Naive thymus-derived CD8-positive, alpha-beta T cell (primary cell): ENCODE measurements at regions of chr20 and their contacts with region 1.

Region 1: DNA sequence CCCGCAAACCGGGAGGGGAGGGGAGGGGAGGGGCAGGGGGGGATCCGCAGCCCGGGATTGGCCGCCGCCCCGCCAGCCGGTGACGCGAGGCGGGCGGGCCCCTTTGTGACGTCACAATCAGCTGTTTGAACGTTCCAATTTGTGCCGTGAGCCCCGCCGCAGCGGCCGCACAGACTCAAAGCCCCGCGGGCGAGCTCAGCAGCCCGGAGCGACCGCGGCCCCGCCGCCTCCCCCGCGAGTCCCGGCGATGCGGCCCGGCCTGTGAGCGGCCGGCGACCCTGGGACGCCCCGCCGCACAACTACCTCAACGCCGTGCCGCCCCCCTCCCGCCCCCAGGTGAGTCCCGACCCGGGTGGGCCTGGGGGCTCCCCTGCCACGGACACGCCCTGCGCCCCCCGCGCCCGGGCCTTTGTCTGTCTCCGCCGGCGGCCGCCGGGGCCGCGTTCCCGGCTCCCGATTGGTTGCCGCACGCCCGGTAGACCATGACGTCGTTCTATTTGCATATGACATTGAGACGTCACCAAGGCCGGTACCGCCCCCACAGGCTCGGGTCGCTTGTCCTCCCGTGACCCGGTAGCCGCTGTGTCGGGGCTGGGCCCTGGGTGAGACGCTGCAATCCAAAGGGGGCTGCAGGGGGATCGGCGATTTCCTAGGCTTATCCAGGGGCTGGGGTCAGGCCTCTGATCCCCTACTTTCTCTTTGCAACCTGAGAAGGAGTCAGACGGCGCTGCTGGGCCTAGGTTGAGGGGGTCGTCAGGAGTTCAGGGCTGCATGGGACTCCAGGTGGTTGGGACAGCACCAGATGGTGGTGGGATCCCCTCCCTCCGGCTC is at the start of gene TP53INP2:
- DNase-seq: peak; percentile 73 to 94 (median 89)
- ATAC-seq: peak; percentile 51 to 66
- H3K4me3 Mint-ChIP-seq: peak within 1 kb of the TSS; percentile 88 to 98 (median 94)
- H3K27ac Mint-ChIP-seq: peak within 1 kb of the TSS; percentile 88 to 100 (median 98)
- H3K4me1 Mint-ChIP-seq: peaks cover 16 to 37% (median 21%) of the 10 kb centered on the region in 4 donors
- H3K27me3 Mint-ChIP-seq: peaks cover 0 to 10% (median 5%) of the 10 kb centered on the region in 5 donors
- polyA plus RNA-seq, gene TP53INP2: 0.08 to 0.64 (median 0.53) TPM

Region 2: DNA sequence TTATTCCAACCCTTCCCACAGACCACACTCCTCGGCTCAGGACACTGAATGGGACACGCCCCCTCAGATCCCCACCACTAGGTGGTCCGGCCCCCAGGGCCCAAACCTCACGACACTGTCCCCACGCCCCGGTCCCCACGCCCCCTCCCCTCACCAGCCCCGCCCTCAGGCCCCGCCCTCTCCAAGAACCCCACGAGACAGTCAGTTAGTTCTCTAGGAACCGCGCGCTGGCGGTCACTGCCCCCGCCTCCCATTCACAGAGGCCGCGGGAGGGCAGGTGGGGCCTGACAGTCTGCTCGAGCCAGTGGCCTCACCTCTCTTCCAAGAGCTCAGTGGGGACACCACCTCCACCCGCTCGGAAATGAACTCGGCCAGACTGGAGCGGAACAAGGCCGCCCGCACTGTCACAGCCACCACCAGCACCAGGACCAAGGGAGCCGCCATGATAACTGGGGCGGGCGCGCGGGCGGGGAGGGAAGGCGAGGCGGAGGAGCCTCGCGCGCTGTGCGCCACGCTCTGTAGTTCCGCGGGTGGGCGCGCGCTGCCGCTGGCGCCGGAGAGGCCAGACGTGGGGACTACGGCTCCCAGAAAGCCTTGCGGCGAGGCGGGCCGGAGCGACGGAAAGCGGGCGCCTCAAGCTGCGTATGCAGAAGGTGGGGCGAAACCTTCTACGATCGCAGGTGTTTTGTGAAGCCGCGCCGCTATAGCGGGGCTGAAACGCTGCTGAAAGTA is 27.6 kb before region 1 on chr20 and contains the start of gene PIGU:
- POLR2A ChIA-PET with region 1: interaction called, 17 read pairs
- DNase-seq: peak; percentile 89 to 97 (median 96)
- ATAC-seq: peak; percentile 95
- H3K4me3 Mint-ChIP-seq: peak within 1 kb of the TSS; percentile 95 to 98 (median 97)
- H3K27ac Mint-ChIP-seq: peak within 1 kb of the TSS; percentile 88 to 98 (median 98)
- H3K4me1 Mint-ChIP-seq: peaks cover 9 to 34% (median 18%) of the 10 kb centered on the region in 4 donors
- H3K27me3 Mint-ChIP-seq: no peaks in the 10 kb centered on the region
- polyA plus RNA-seq, gene PIGU: 18.3 to 25.4 (median 23.2) TPM